GM18951 (cell line): ENCODE measurements at regions of chr17 and their contacts with region 1.

Region 1: DNA sequence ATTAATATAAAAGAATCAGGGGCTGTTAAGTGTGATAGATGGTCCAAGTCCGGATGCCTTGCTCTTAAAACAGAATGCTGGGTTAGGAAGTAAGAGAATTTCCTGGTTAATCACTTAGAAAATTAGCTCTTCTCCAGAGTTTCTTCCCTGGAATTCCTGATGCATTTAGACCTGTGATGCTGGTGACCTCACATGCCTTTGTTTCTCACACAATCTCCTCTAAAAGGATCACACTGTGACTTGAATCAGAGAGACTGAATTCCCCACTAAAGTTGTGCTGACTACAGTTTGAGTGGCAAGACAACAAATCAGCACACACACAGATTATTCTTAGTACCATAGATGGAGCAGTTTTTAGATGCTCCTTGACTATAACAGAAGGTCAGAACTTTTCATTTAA is 4.4 kb upstream of the RNF43 start:
- POLR2A ChIP-seq: no peak

Region 2: DNA sequence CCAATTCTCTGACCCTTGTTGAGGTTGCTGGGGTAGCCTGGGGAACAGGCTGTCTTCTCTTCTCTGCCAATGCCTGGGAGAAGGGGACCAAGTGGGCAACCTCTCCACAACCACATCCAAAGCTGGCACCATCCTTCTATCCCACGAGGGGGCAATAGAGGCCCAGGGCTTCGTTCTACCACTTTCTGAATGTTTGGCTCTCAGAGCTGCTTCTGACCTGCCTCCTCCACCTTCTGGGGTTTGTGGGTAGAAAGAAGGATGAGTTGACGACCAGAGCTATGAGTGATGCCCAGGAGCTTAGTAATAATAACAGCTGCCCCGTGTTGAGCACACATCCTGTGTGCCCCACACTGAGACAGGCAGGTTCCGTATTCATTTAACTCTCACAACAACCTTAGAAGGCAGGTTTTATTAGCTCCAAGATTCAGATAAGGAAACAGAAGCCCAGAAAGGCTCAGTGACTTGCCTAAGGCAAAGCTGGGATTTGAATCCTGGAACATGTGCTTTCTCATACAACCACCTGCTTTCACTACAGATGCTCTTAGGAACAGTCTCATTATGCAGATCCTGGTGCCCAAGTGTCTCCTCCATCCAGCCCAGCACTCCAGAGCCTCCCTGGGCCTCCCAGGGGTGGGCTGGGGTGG is 104.2 kb before region 1 on chr17:
- in situ Hi-C with region 1: loop called (anchors 10 kb)
- POLR2A ChIP-seq: no peak

Region 3: DNA sequence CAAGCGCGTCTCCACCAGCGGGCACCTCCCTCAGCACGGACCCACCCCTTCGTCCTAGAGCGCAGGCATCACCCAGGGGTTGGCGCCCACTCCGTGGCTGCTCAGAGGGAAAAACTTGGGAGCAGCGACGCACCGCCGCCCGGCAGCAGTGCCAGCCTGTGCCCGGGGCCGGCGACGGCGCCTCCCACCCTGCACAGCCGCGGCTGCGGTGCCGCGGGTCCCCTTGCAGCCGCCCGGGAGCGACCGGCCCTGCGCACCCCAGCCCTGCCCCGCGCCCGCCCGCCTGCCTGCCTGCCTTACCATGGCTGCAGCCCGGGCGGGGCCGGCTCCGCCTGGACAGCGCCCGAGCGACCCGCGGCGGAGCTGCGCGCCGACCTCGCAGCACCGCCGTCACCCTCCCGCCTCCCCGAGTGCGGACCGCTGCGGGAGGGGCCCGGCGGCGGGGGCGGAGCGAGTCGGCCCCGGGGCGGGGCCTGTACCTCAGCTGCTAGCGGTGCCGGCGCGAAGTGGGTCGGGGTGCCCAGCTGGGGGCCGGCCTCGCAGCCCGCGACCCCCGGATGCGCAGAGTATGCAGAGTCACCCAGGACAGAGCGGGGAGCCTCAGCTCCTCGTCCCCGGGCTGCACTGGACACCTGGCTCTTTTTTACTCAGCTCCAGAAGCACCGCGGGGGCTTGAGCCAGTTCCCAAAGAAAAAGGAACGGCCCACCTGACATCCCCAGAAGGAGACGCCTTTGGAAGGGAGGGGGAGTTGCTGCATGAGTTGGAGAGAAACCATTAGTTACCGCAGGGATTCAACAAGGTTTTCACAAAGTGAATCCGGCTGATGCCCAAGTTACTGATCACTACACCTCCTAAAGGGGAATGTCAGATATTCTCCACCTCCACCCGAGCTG is 110.2 kb after region 1 on chr17:
- in situ Hi-C with region 1: no loop called
- POLR2A ChIP-seq: no peak